OCI-LY7 (cell line): ENCODE measurements at regions of chr6 and their contacts with region 1.

Region 1: DNA sequence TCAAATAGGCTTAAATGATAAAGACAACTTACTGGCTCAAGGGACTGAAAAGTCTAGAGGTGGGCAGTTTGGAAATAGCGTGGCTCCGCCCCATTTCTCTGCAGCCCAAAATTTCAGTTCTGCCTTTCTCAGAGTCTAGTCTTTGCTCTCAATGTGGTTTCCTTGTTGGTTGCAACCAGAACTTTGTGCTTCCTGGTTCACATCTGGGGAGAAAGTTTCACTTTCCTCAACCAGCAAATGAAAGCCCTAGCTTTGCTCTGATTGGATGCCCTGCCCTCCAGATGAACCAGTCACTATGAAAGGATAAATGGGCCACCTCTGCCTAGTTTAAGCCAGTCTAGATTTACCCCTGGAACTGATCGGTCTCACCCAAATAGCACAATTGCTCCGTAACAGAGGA is 14.9 kb downstream of the SYCP2L start:
- DNase-seq: peak; percentile 88
- H3K4me3 ChIP-seq: peak overlapping the region; percentile 43
- H3K27ac ChIP-seq: peak overlapping the region; percentile 69
- H3K4me1 ChIP-seq: peaks cover 18% of the 10 kb centered on the region
- CTCF ChIP-seq: no peak

Region 2: GRCh38 chr6:10837995-10838793 is 63.6 kb before region 1 on chr6 and contains the start of gene MAK:
- CTCF ChIA-PET with region 1: no interaction called
- POLR2A ChIA-PET with region 1: interaction called, 4 read pairs
- intact Hi-C with region 1: loop called (anchors 5 kb)
- DNase-seq: peak; percentile 91
- H3K4me3 ChIP-seq: peak within 1 kb of the TSS; percentile 72
- H3K27ac ChIP-seq: peak within 1 kb of the TSS; percentile 74
- H3K4me1 ChIP-seq: peaks cover 22% of the 10 kb centered on the region
- CTCF ChIP-seq: no peak
- total RNA-seq, gene MAK: not detected in 2 replicates

Region 3: DNA sequence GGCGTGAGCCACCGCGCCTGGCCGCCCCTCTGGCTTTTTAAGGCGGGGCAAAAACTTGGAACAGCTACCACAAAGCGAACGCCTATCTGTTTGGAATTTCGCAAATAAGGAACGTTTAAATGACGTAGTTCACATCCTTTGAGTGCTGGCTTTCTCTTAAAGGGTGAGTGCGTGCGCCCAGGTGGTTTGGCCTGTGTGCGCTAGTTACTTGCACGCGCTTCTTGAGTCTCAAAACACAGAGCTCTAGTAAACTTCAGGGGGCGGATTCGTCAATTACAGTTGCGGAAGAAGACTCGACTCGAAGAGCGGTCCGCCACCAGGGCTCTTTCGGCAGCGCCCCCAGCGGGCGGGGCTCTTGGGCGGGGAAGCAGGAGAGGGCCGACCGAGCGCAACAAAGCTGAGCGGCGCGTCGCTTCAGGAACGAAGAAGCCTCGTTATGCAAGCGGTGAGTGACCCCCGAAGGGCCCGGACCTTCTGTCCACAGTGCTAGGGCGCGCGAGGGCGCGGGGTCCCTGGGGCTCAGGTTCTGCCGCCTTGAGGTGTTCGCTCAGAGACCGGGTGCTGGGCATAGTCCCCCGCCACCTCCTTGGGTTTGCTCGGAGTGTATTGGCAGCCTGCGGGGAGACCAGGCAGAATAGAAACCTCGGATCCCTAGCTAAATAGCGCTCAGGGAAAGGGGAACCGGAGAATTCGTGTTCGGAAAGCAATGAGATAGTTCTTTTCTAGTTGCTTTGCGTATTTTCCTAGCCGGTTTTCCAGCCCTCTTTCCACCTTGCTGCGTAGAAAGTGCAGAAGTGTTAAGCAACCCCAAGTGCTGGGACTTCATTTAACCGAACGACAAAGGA is 14.9 kb before region 1 on chr6 and contains the start of gene SYCP2L:
- CTCF ChIA-PET with region 1: interaction called, 3 read pairs
- POLR2A ChIA-PET with region 1: interaction called, 48 read pairs
- intact Hi-C with region 1: no loop called
- DNase-seq: no peak
- H3K4me3 ChIP-seq: no peak within 1 kb of the TSS
- H3K27ac ChIP-seq: no peak within 1 kb of the TSS
- H3K4me1 ChIP-seq: peaks cover 15% of the 10 kb centered on the region
- CTCF ChIP-seq: no peak
- total RNA-seq, gene SYCP2L: 0.15 and 1.4 TPM in 2 replicates

Region 4: GRCh38 chr6:11093589-11094410 is 192.0 kb after region 1 on chr6 and contains the start of gene SMIM13:
- CTCF ChIA-PET with region 1: no interaction called
- POLR2A ChIA-PET with region 1: interaction called, 3 read pairs
- intact Hi-C with region 1: loop called (anchors 5 kb)
- DNase-seq: peak; percentile 97
- H3K4me3 ChIP-seq: peak within 1 kb of the TSS; percentile 72
- H3K27ac ChIP-seq: peak within 1 kb of the TSS; percentile 70
- H3K4me1 ChIP-seq: peaks cover 31% of the 10 kb centered on the region
- CTCF ChIP-seq: peak; percentile 56
- total RNA-seq, gene SMIM13: 13.9 and 16.4 TPM in 2 replicates

Region 5: GRCh38 chr6:12289933-12290820 is 1388.4 kb after region 1 on chr6 and contains the start of gene EDN1:
- CTCF ChIA-PET with region 1: no interaction called
- POLR2A ChIA-PET with region 1: no interaction called
- intact Hi-C with region 1: no loop called
- DNase-seq: peak; percentile 57
- H3K4me3 ChIP-seq: peak within 1 kb of the TSS; percentile 57
- H3K27ac ChIP-seq: no peak within 1 kb of the TSS
- H3K4me1 ChIP-seq: no peaks in the 10 kb centered on the region
- CTCF ChIP-seq: peak; percentile 36; the same call in 1 of the 2 replicates
- total RNA-seq, gene EDN1: not detected in 2 replicates